ENCODE measurements at regions of chr17 and their contacts with region 1.

Region 1: GRCh38 chr17:36937966-36938565 is 791 bp downstream of the LHX1 start:
- DNase-seq: no peak
- H3K4me3 Mint-ChIP-seq: peak overlapping the region; percentile 55
- H3K27ac Mint-ChIP-seq: peak overlapping the region; percentile 49
- H3K4me1 Mint-ChIP-seq: peaks cover 20% of the 10 kb centered on the region
- H3K27me3 Mint-ChIP-seq: peaks cover 72% of the 10 kb centered on the region

Region 2: GRCh38 chr17:36742267-36743000 is 195.6 kb before region 1 on chr17:
- intact Hi-C with region 1: no loop called
- DNase-seq: no peak
- H3K4me3 Mint-ChIP-seq: no peak overlapping the region
- H3K27ac Mint-ChIP-seq: no peak overlapping the region
- H3K4me1 Mint-ChIP-seq: no peaks in the 10 kb centered on the region
- H3K27me3 Mint-ChIP-seq: no peaks in the 10 kb centered on the region

Region 3: DNA sequence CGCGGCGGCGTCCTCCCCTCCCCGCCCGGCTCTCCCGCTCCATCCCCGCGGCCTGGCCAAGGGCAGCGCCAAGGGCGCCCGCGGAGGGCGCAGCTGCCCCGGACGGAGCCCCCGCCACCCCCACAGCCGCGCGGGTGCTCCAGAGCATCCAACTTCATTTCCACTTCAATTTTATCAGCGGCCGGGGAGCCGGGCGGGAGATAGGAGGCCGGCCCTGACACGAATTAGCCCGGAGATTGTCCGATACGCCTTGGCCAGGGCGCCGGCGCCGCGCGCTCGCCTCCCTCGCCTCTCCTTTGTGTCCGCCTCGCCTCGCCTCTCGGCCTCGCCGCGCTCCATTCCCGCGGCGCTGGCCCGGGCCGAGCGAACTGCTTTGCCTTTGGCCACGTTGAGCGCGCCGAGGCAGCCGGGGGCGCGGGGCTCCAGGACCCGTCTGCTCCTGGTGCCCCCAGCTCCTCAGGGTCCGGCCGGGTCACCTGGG is 129.8 kb before region 1 on chr17:
- intact Hi-C with region 1: loop called (anchors 5 kb)
- DNase-seq: no peak
- H3K4me3 Mint-ChIP-seq: no peak overlapping the region
- H3K27ac Mint-ChIP-seq: no peak overlapping the region
- H3K4me1 Mint-ChIP-seq: no peaks in the 10 kb centered on the region
- H3K27me3 Mint-ChIP-seq: peaks cover 66% of the 10 kb centered on the region

Measured in activated T-helper 2 cell treated with anti-CD3 and anti-CD28 coated beads, Interferon-gamma antibody, Interleukin-2, Interleukin-4, amounts not matched to agents 10 μg/mL and 5 μg/mL and 100 μg/mL, durations not matched to agents 14 hours and 24 hours and 36 hours (primary cell).